ENCODE measurements at regions of chr1 and their contacts with region 1.

Region 1: GRCh38 chr1:66764994-66765578 is 12.8 kb downstream of the DYNLT5 start:
- H3K4me3 Mint-ChIP-seq: no peak overlapping the region
- H3K27ac Mint-ChIP-seq: no peak overlapping the region
- H3K4me1 Mint-ChIP-seq: peaks cover 12% of the 10 kb centered on the region
- H3K27me3 Mint-ChIP-seq: no peaks in the 10 kb centered on the region

Region 2: DNA sequence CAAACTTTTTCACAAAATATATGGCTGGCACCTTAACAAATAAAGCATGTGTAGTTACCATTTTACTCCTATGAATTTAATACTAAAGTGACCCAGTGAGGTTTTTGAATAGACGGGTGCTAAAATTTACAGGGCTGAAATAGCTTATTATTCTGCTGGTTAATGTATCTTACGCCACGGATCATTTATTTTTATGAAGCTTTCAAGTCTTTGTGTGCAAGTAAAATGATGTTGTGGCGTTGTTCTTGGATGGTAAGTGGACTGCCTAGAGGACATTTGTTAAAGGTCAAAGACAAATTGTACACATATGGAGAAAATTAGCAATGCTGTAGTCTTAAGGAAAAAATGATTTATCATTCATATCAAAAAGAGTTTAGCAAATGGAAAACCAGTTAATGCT is 13.2 kb after region 1 on chr1:
- intact Hi-C with region 1: no loop called
- H3K4me3 Mint-ChIP-seq: no peak overlapping the region
- H3K27ac Mint-ChIP-seq: no peak overlapping the region
- H3K4me1 Mint-ChIP-seq: no peaks in the 10 kb centered on the region
- H3K27me3 Mint-ChIP-seq: no peaks in the 10 kb centered on the region

Region 3: DNA sequence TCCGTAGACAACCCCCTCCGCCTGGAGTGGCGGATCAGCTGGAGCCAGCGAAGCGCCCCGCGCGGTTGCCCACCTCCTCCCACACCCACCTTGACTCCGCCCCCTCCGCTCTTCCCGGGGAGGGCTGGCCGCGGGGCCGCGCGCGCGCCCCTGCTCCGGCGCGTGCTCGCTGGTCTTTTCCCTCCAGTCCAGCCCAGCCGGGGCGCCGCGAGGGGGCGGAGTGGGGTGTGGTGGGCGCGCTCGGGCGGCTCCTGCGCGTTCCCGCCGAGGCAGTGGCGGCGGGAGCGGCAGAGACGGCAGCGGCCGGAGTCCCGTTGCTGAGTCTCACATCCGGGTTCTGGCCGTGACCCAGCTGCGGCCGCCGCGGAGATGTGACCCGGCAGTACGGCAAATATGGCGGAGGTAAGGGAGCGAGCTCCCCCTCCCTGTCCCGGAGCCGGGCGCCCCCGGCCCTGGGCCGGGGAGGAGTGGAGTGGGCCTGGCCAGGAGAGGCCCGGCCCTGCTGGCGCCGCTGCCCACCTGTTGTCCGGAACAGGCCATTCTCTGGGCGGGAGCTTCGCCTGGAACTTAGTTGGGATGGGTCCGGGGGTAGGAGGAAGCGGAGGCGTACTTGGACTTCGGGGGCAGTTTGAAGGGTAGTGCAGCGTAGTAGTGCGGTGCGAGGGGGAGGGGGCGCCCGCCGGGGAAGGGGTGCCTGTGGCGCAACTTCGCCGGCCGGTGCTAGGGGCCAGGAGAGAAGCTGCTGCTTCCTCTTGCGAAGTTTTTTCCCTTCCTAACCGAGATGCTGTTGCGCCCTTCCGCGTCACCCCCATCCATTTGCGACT is 165.1 kb after region 1 on chr1:
- intact Hi-C with region 1: loop called (anchors 10 kb)
- H3K4me3 Mint-ChIP-seq: peak overlapping the region; percentile 94
- H3K27ac Mint-ChIP-seq: peak overlapping the region; percentile 96
- H3K4me1 Mint-ChIP-seq: peaks cover 33% of the 10 kb centered on the region
- H3K27me3 Mint-ChIP-seq: no peaks in the 10 kb centered on the region

Region 4: GRCh38 chr1:66978201-66978600 is 213.1 kb after region 1 on chr1:
- intact Hi-C with region 1: loop called (anchors 10 kb)
- H3K4me3 Mint-ChIP-seq: no peak overlapping the region
- H3K27ac Mint-ChIP-seq: no peak overlapping the region
- H3K4me1 Mint-ChIP-seq: no peaks in the 10 kb centered on the region
- H3K27me3 Mint-ChIP-seq: no peaks in the 10 kb centered on the region

Region 5: GRCh38 chr1:67134695-67135094 is 369.6 kb after region 1 on chr1 and contains the start of gene C1orf141:
- intact Hi-C with region 1: no loop called
- H3K4me3 Mint-ChIP-seq: peak within 1 kb of the TSS; percentile 58
- H3K27ac Mint-ChIP-seq: peak within 1 kb of the TSS; percentile 21
- H3K4me1 Mint-ChIP-seq: peaks cover 6% of the 10 kb centered on the region
- H3K27me3 Mint-ChIP-seq: peaks cover 4% of the 10 kb centered on the region

Region 6: DNA sequence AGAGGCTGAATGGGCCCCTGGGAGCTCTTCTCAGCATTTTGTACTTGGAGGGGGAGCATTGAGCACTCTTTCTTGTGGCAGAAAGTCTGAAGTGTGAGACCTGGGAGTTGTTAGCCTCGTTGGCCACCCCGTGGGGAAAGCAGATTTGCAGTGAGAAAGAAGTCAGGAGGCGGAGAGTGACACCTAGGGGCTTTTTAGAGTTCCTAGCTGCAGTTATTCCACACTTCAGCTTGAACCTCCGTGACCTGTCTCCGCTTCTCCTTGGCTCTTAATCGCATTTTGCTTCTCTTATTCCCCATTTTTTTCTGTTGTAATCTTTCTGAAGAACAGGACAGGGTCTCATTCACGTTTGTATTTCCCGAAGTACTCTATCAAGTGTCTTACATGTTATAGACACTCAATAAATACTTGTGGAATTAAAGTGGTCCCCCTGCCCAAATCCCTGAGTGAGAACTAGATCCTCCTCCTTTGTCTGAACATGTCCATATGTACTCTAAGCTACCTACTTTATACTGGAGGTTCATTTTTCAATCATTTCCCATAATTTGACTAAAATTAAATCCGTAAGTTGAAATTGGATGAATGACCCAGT is 384.2 kb after region 1 on chr1:
- intact Hi-C with region 1: loop called (anchors 5 kb)
- H3K4me3 Mint-ChIP-seq: no peak overlapping the region
- H3K27ac Mint-ChIP-seq: no peak overlapping the region
- H3K4me1 Mint-ChIP-seq: peaks cover 8% of the 10 kb centered on the region
- H3K27me3 Mint-ChIP-seq: peaks cover 5% of the 10 kb centered on the region

Region 7: DNA sequence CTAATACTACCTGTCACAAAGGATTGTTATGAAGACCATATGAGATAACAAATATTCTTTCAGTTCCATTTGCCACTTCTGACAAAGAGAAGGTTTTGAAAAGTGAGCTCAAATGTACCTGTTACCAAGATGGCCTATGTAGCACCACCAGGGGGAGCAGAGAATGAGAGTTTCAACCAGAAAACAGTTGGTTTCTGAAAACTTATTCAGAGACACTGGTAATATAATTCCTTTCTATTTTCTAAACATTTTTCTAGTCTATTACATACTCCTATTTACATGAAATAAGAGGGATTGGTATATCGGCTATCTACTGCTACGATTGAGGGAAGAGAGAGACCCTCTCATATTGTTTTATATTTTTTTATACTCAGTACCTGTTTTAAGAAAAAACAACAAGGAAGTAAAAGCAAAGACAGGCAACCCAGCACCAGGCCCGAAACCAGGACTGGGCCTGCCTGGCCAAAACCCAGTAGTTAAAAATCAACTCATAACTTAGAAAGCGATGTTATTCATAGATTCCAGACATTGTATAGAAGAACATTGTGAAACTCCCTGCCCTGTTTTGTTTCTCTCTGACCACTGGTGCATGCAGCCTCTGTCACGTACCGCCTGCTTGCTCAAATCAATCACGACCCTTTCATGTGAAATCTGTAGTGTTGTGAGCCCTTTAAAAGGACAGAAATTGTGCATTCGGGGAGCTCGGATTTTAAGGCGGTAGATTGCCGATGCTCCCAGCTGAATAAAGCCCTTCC is 449.5 kb after region 1 on chr1:
- intact Hi-C with region 1: loop called (anchors 5 kb)
- H3K4me3 Mint-ChIP-seq: no peak overlapping the region
- H3K27ac Mint-ChIP-seq: no peak overlapping the region
- H3K4me1 Mint-ChIP-seq: no peaks in the 10 kb centered on the region
- H3K27me3 Mint-ChIP-seq: no peaks in the 10 kb centered on the region

Region 8: DNA sequence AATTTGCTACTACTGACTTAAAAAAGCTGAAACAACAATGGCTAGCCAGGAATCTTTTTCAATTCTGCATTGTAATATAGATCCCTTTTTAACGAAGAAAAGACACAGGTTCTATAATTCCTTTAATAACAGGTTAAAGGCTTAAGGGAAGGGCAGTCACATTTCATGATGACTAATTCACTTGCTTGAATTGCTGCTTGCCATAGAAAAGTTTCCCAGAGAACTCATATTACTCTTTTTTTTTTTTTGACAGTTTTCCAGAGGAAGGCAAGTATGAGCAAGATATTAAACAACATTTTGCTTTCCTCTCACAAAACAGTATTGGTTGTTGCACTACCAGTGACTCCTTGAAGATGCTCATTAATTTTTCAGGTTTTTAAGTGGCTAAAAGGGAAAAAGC is 462.1 kb after region 1 on chr1:
- intact Hi-C with region 1: no loop called
- H3K4me3 Mint-ChIP-seq: no peak overlapping the region
- H3K27ac Mint-ChIP-seq: no peak overlapping the region
- H3K4me1 Mint-ChIP-seq: peaks cover 5% of the 10 kb centered on the region
- H3K27me3 Mint-ChIP-seq: no peaks in the 10 kb centered on the region

Measured in dendritic cell treated with granulocyte-macrophage colony-stimulating factor and Interleukin-4, amounts not matched to agents 40 ng/mL and 50 ng/mL, for 4 days (primary cell).